Esophagus squamous epithelium (tissue), 5 donors: ENCODE measurements at regions of chr3 and their contacts with region 1.

Region 1: GRCh38 chr3:98817547-98818041 is 54.5 kb downstream of the ST3GAL6 start:
- DNase-seq: no peak
- H3K4me3 ChIP-seq: no peak overlapping the region
- H3K27ac ChIP-seq: no peak overlapping the region
- H3K4me1 ChIP-seq: peaks cover 0 to 3% (median 0%) of the 10 kb centered on the region in 3 donors
- H3K27me3 ChIP-seq: no peaks in the 10 kb centered on the region
- CTCF ChIP-seq: peak; percentile 52 to 86 (median 78)
- POLR2A ChIP-seq: no peak

Region 2: GRCh38 chr3:98602078-98602678 is 215.4 kb before region 1 on chr3:
- intact Hi-C with region 1: loop called (anchors 5 kb)
- DNase-seq: no peak
- H3K4me3 ChIP-seq: no peak overlapping the region
- H3K27ac ChIP-seq: no peak overlapping the region
- H3K4me1 ChIP-seq: no peaks in the 10 kb centered on the region
- H3K27me3 ChIP-seq: no peaks in the 10 kb centered on the region
- CTCF ChIP-seq: peak; percentile 19 to 72 (median 52)
- POLR2A ChIP-seq: no peak

Region 3: GRCh38 chr3:98994128-98994762 is 176.7 kb after region 1 on chr3:
- intact Hi-C with region 1: loop called (anchors 5 kb)
- DNase-seq: no peak
- H3K4me3 ChIP-seq: no peak overlapping the region
- H3K27ac ChIP-seq: no peak overlapping the region
- H3K4me1 ChIP-seq: no peaks in the 10 kb centered on the region
- H3K27me3 ChIP-seq: no peaks in the 10 kb centered on the region
- CTCF ChIP-seq: peak in 5 of 6 experiments; percentile 52 to 69 (median 59)
- POLR2A ChIP-seq: no peak